Aorta (tissue), 5 donors: ENCODE measurements at regions of chr9 and their contacts with region 1.

Region 1: GRCh38 chr9:70413798-70414775 is at the start of gene KLF9:
- DNase-seq: peak; percentile 95 to 98
- ATAC-seq: peak; percentile 90
- H3K4me3 ChIP-seq: peak within 1 kb of the TSS; percentile 83 to 88
- H3K27ac ChIP-seq: peak within 1 kb of the TSS; percentile 98 to 100
- H3K4me1 ChIP-seq: no peaks in the 10 kb centered on the region
- H3K27me3 ChIP-seq: no peaks in the 10 kb centered on the region
- total RNA-seq, gene KLF9: 38.4 to 122 TPM

Region 2: DNA sequence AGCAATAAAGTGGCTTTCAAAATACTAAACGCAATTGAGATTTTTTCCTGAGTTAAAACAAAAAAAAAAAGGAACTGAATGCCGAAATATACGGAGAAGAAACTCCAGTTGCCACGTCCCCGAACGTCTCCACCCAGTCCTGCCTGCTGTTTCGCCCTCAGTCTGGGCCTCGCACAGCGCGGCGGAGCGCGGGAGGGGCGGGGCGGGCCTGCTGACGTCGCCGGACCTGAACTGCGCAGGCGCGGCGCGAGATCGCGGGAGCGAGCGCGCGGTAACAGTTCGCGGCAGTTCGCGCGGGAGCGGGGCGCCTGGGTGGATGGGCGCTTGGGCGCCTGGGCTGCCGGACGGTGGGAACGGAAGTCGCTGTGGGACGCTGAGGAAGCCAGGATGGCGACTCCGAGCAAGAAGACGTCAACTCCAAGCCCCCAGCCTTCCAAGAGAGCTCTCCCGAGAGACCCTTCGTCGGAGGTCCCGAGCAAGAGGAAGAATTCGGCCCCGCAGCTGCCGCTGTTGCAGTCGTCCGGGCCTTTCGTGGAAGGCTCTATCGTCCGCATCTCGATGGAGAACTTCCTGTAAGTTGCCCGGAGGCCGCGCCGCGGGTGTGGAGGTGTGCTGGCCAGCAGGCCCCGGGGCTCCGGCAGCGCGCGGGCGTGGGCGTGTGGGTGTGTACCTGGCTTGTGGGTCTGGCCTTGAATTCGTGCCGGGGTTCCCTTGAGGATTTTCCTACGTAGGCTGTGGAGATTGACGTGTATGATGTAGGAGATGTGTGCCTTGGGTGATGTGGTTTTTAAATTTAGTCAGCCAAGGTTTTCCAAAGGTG is 155.2 kb before region 1 on chr9 and contains the start of gene SMC5:
- intact Hi-C with region 1: loop called in 1 of 2 experiments (anchors 10 kb)
- DNase-seq: peak; percentile 93 to 96
- ATAC-seq: peak; percentile 98
- H3K4me3 ChIP-seq: peak within 1 kb of the TSS; percentile 94 to 95
- H3K27ac ChIP-seq: peak within 1 kb of the TSS; percentile 64 to 87
- H3K4me1 ChIP-seq: peaks cover 8 to 15% of the 10 kb centered on the region in 2 donors
- H3K27me3 ChIP-seq: no peaks in the 10 kb centered on the region
- total RNA-seq, gene SMC5: 36.4 to 37.0 TPM

Region 3: DNA sequence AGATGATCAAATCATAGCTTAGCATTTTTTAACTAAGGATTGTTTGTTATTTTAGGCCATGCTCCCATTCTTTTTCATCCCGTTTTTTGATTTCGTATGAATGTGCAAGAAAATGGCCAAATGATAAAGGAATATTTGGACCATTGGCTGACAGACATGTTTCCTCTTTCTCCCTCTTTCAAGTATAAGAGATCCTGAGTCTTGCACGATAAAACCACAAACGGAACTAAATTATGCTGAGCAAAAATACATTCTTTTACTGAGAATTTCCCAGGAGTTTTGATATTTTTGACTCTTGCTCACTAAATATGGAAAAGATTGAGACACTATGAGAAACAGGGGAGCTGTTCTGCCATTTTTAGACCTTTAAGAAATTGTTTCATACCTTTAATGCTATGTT is 90.7 kb after region 1 on chr9:
- intact Hi-C with region 1: loop called in 1 of 2 experiments (anchors 5 kb)
- DNase-seq: no peak
- ATAC-seq: no peak
- H3K4me3 ChIP-seq: no peak overlapping the region
- H3K27ac ChIP-seq: no peak overlapping the region
- H3K4me1 ChIP-seq: no peaks in the 10 kb centered on the region
- H3K27me3 ChIP-seq: no peaks in the 10 kb centered on the region

Region 4: DNA sequence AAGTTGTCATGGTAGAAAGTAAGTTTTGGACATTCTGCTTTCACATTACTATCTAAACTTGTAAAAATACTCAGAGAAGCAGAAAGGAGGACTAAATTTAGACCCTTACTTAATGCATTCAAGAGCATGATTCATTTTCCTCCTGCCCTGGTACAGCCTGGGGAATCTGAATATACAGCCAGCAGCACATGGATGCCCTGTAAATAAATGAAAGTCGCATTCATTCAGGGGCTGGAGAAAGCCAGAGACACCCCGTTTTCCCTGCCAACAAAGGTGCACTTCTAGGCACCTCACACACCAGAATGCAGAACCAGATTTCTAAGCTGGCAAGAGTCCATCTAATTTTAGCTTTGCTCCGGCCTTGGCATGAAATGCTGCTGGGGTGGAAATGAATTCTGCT is 173.1 kb after region 1 on chr9:
- intact Hi-C with region 1: loop called (anchors 2 to 5 kb)
- DNase-seq: no peak
- ATAC-seq: peak; percentile 81
- H3K4me3 ChIP-seq: no peak overlapping the region
- H3K27ac ChIP-seq: peak overlapping the region; percentile 94 to 100
- H3K4me1 ChIP-seq: peaks cover 14 to 17% of the 10 kb centered on the region in 2 donors
- H3K27me3 ChIP-seq: no peaks in the 10 kb centered on the region